ENCODE measurements at regions of chrX and their contacts with region 1.

Region 1: GRCh38 chrX:115642895-115643530 is 82.0 kb downstream of the PLS3 start:
- DNase-seq: peak in 2 of 10 donors; percentile 25 to 32
- H3K4me3 ChIP-seq: no peak overlapping the region
- H3K27ac ChIP-seq: peak overlapping the region in 51 of 59 donors; percentile 2 to 85 (median 53)
- H3K27me3 ChIP-seq: peaks cover 0 to 85% (median 18%) of the 10 kb centered on the region in 45 donors
- CTCF ChIP-seq: peak; percentile 77 to 100 (median 96)

Region 2: GRCh38 chrX:115330498-115331168 is 312.4 kb before region 1 on chrX:
- intact Hi-C with region 1: loop called (anchors 2 to 5 kb)
- DNase-seq: peak in 6 of 10 donors; percentile 11 to 57 (median 35)
- H3K4me3 ChIP-seq: peak overlapping the region in 39 of 59 donors; percentile 6 to 56 (median 36)
- H3K27ac ChIP-seq: peak overlapping the region in 3 of 59 donors; percentile 23 to 40 (median 32)
- H3K27me3 ChIP-seq: peaks cover 0 to 77% (median 19%) of the 10 kb centered on the region in 45 donors
- CTCF ChIP-seq: peak; percentile 65 to 97 (median 89)

Region 3: DNA sequence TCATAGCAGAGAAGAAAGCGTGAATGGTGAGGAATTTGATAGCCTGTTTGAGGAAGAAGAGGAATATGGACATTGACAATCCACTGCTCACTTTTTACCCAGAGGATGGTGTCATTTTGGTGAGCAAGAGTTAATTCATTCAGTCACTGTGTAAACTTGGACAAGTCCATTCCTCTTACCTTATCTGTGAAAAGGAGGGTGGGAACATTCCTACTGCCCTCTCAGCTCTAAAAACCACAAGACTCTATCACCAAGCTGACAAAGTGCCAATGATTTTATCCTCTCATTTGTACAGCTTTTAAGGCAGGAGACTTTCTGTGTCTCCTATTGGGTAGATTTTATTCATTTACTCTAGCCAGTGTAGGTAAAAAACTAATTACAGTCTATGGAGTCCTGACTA is 249.7 kb before region 1 on chrX:
- intact Hi-C with region 1: loop called in 1 of 2 experiments (anchors 10 kb)
- DNase-seq: no peak
- H3K4me3 ChIP-seq: no peak overlapping the region
- H3K27ac ChIP-seq: peak overlapping the region in 1 of 59 donors; percentile 36
- H3K27me3 ChIP-seq: peaks cover 0 to 86% (median 29%) of the 10 kb centered on the region in 45 donors
- CTCF ChIP-seq: no peak

Region 4: GRCh38 chrX:115560978-115561604 is 81.9 kb before region 1 on chrX and contains the start of gene PLS3:
- intact Hi-C with region 1: loop called (anchors 5 to 10 kb)
- DNase-seq: peak; percentile 20 to 88 (median 82)
- H3K4me3 ChIP-seq: peak within 1 kb of the TSS; percentile 42 to 81 (median 66)
- H3K27ac ChIP-seq: peak within 1 kb of the TSS in 58 of 59 donors; percentile 21 to 90 (median 82)
- H3K27me3 ChIP-seq: peaks cover 0 to 98% (median 54%) of the 10 kb centered on the region in 45 donors
- CTCF ChIP-seq: no peak
- total RNA-seq, gene PLS3: 33.8 to 96.0 (median 55.8) TPM

Measured in dorsolateral prefrontal cortex (tissue), 120 donors.